Activated naive CD4-positive, alpha-beta T cell treated with anti-CD3 and anti-CD28 coated beads for 36 hours (primary cell): ENCODE measurements at regions of chr15 and their contacts with region 1.

Region 1: DNA sequence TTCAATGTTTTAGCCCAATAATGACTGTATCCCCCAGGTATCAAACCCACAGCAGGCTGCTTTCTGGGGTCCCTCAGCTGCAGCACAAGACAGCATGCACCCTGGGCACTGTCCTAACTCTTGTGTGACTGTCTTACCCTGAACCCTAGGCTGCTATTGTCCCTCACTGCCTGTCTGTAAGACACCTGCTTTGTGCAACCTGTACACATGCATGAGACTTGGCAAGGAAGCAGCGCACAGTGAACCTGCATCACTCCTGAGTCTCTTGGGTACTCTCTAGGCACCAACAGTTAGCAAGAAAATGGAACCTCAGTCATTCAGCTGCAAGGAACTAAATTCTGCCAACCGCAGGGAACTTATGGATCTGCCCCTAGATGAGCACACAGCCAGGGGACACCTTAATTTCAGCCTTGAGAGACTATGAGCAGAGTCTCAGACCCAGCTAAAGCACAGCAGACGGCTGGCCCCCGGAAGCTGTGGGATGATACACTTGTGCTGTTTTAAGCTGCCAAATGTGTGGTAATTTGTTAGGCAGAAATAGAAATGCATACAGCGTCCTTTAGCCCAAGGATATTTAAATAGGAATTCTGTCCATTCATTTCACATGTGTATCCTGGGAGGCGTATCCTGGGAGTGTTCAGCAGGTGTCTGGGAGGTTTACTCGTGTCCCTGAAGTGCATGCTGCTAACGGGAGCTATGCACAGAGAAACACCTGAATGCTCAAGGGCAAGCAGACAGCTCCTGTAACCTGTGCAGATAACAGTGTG is 223.8 kb downstream of the KLF13 start:
- DNase-seq: no peak
- H3K4me3 Mint-ChIP-seq: no peak overlapping the region
- H3K27ac Mint-ChIP-seq: no peak overlapping the region
- H3K4me1 Mint-ChIP-seq: peaks cover 17% of the 10 kb centered on the region
- H3K27me3 Mint-ChIP-seq: peaks cover 16% of the 10 kb centered on the region

Region 2: GRCh38 chr15:31511707-31512310 is 38.6 kb before region 1 on chr15:
- CTCF ChIA-PET with region 1: no interaction called
- intact Hi-C with region 1: loop called (anchors 2 kb)
- DNase-seq: peak; percentile 84
- H3K4me3 Mint-ChIP-seq: no peak overlapping the region
- H3K27ac Mint-ChIP-seq: no peak overlapping the region
- H3K4me1 Mint-ChIP-seq: peaks cover 15% of the 10 kb centered on the region
- H3K27me3 Mint-ChIP-seq: peaks cover 5% of the 10 kb centered on the region

Region 3: GRCh38 chr15:31537770-31538592 is 12.4 kb before region 1 on chr15:
- CTCF ChIA-PET with region 1: no interaction called
- intact Hi-C with region 1: no loop called
- DNase-seq: no peak
- H3K4me3 Mint-ChIP-seq: no peak overlapping the region
- H3K27ac Mint-ChIP-seq: no peak overlapping the region
- H3K4me1 Mint-ChIP-seq: no peaks in the 10 kb centered on the region
- H3K27me3 Mint-ChIP-seq: peaks cover 31% of the 10 kb centered on the region